Activated CD4-positive, alpha-beta memory T cell treated with anti-CD3 and anti-CD28 coated beads for 36 hours (primary cell): ENCODE measurements at regions of chr12 and their contacts with region 1.

Region 1: DNA sequence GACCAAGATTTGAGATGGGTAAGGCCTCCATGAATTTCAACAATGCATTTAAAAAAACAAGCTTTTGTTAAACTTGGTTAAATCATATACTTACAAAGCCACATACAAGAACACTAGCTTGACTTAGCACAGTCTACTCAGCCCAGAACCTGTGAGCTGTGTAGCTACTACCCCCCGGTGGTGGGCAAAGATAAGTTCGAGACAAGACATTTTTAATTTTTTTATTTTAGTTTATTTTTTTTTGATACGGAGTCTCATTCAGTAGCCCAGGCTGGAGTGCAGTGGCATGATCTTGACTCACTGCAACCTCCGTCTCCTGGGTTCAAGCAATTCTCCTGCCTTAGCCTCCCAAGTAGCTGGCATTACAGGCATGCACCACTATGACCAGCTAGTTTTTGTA is 3.7 kb upstream of the NECAP1 start:
- DNase-seq: peak; percentile 75
- H3K4me3 Mint-ChIP-seq: no peak overlapping the region
- H3K27ac Mint-ChIP-seq: peak overlapping the region; percentile 57
- H3K4me1 Mint-ChIP-seq: peaks cover 45% of the 10 kb centered on the region
- H3K27me3 Mint-ChIP-seq: no peaks in the 10 kb centered on the region

Region 2: DNA sequence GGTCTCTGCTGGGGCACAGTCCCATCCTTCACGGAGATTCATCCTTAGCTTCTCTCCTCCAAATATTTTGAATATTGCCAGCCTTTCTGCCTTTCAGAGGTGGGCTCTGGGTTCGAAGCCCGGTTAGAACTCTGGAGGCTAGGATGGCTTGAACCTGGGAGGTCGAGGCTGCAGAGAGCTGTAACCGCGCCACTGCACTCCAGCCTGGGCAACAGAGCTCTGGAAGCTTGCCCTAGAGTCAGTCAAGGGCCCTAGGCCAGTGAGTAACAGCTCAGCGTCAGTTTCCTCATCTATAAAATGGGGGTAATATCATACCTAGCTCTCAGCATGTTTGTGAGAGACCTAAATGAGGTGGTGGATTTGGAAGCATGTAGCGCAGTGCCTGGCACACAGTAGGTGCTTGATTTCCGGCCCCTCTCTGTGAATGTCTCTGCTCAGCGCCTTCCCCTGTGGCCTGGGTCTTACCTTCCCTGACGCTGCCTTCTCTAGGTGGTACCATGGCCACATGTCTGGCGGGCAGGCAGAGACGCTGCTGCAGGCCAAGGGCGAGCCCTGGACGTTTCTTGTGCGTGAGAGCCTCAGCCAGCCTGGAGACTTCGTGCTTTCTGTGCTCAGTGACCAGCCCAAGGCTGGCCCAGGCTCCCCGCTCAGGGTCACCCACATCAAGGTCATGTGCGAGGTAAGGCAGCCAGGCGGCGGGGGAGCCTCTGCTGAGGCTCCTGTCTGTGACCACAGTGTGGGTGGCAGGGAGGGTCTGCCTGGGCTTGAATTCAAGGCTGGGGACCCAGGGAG is 1123.9 kb before region 1 on chr12:
- CTCF ChIA-PET with region 1: no interaction called
- POLR2A ChIA-PET with region 1: no interaction called
- intact Hi-C with region 1: no loop called
- DNase-seq: no peak
- H3K4me3 Mint-ChIP-seq: peak overlapping the region; percentile 98
- H3K27ac Mint-ChIP-seq: peak overlapping the region; percentile 97
- H3K4me1 Mint-ChIP-seq: peaks cover 71% of the 10 kb centered on the region
- H3K27me3 Mint-ChIP-seq: no peaks in the 10 kb centered on the region

Region 3: DNA sequence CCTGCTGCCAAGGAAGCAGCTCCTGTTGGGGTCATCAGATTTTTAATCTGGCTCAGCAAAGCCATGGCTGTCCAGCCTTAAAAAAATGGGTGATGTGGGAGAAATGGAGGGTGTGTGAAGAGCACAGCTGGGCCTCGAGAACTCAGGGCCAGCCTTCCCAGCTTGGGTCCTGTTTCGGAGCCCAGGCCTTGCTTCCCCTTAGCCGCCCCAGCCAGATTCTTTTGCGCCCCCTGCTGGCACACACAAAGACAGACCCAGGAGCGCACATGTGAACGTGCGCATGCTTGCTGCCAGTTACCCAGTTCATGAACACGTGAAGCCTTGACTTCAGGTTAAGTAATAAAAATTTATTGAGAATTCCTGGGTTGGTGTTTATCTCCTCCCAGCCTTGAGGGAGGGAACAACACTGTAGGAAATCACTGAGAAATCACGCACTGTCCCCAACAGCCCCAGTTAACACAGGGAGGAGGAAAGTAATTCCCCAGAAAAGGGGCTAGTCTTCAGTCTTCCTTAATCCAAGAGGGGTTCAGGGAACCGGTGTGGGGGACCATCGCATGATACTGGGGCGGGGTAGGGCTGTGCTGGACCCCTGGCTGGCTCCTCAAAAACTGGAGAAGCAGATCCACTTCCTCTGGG is 1113.3 kb before region 1 on chr12:
- CTCF ChIA-PET with region 1: no interaction called
- POLR2A ChIA-PET with region 1: no interaction called
- intact Hi-C with region 1: loop called (anchors 2 kb)
- DNase-seq: peak; percentile 93
- H3K4me3 Mint-ChIP-seq: no peak overlapping the region
- H3K27ac Mint-ChIP-seq: peak overlapping the region; percentile 89
- H3K4me1 Mint-ChIP-seq: peaks cover 72% of the 10 kb centered on the region
- H3K27me3 Mint-ChIP-seq: no peaks in the 10 kb centered on the region

Region 4: DNA sequence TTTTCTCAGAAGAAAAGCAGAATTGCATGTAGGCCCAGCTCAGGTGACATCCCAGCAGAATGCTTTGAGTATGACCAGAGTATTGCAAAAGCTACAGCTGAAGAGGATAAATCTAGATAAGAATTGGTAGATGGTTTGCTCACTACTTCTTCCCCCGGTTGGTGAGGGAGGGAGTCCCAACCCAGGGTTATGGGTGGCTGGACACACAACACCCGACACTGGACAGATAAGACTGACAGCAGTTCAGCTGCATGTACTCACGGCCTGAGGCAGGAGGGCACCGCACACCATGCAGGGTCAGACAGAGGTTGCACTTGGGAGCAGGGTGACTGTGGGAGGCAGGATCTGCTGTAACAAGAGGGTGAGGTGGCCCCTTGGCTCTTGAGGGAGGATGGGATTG is 329.5 kb before region 1 on chr12:
- CTCF ChIA-PET with region 1: no interaction called
- POLR2A ChIA-PET with region 1: no interaction called
- intact Hi-C with region 1: no loop called
- DNase-seq: no peak
- H3K4me3 Mint-ChIP-seq: no peak overlapping the region
- H3K27ac Mint-ChIP-seq: no peak overlapping the region
- H3K4me1 Mint-ChIP-seq: no peaks in the 10 kb centered on the region
- H3K27me3 Mint-ChIP-seq: peaks cover 2% of the 10 kb centered on the region

Region 5: GRCh38 chr12:7933255-7933729 is 145.1 kb before region 1 on chr12:
- CTCF ChIA-PET with region 1: interaction called, 39 read pairs
- POLR2A ChIA-PET with region 1: interaction called, 6 read pairs
- intact Hi-C with region 1: loop called (anchors 1 kb)
- DNase-seq: peak; percentile 85
- H3K4me3 Mint-ChIP-seq: no peak overlapping the region
- H3K27ac Mint-ChIP-seq: no peak overlapping the region
- H3K4me1 Mint-ChIP-seq: peaks cover 29% of the 10 kb centered on the region
- H3K27me3 Mint-ChIP-seq: no peaks in the 10 kb centered on the region

Region 6: DNA sequence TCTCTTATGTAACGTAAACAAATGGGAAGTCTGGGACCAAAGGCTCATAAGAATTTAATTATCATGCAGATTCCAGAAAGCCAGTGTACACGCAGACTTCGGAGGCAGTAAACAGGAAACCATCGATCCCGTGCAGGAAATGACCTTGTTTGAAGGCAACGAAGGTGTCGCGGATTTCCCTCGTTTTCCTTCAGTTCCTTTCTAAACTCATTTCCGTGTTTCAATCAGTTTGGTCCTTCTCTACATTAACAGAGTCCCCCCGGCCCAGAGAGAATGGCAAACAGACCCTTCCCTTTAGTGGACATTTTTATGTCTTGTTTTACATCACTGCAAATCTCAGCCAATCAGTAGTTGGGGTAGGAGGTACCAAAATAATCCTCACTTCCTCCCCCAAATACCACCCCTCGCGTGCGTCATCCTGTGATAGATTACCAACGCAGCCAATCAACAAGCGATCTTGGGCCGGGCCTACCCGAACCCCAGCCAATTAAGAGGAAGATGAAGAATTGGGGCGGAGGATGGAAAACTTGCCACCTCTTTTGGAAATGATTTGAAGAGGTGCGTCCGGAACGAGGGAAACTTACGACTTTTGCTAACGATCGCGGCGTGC is 52.0 kb before region 1 on chr12:
- CTCF ChIA-PET with region 1: interaction called, 17 read pairs
- POLR2A ChIA-PET with region 1: interaction called, 5 read pairs
- intact Hi-C with region 1: loop called (anchors 1 kb)
- DNase-seq: peak; percentile 98
- H3K4me3 Mint-ChIP-seq: peak overlapping the region; percentile 88
- H3K27ac Mint-ChIP-seq: peak overlapping the region; percentile 100
- H3K4me1 Mint-ChIP-seq: peaks cover 9% of the 10 kb centered on the region
- H3K27me3 Mint-ChIP-seq: no peaks in the 10 kb centered on the region

Region 7: GRCh38 chr12:8045952-8046944 is 32.1 kb before region 1 on chr12:
- CTCF ChIA-PET with region 1: interaction called, 263 read pairs
- POLR2A ChIA-PET with region 1: no interaction called
- intact Hi-C with region 1: loop called (anchors 1 kb)
- DNase-seq: peak; percentile 88
- H3K4me3 Mint-ChIP-seq: no peak overlapping the region
- H3K27ac Mint-ChIP-seq: peak overlapping the region; percentile 45
- H3K4me1 Mint-ChIP-seq: peaks cover 18% of the 10 kb centered on the region
- H3K27me3 Mint-ChIP-seq: no peaks in the 10 kb centered on the region

Region 8: GRCh38 chr12:8088574-8088973 is 10.2 kb after region 1 on chr12:
- CTCF ChIA-PET with region 1: interaction called, 20 read pairs
- POLR2A ChIA-PET with region 1: no interaction called
- intact Hi-C with region 1: no loop called
- DNase-seq: peak; percentile 63
- H3K4me3 Mint-ChIP-seq: peak overlapping the region; percentile 62
- H3K27ac Mint-ChIP-seq: peak overlapping the region; percentile 89
- H3K4me1 Mint-ChIP-seq: peaks cover 49% of the 10 kb centered on the region
- H3K27me3 Mint-ChIP-seq: no peaks in the 10 kb centered on the region

Region 9: DNA sequence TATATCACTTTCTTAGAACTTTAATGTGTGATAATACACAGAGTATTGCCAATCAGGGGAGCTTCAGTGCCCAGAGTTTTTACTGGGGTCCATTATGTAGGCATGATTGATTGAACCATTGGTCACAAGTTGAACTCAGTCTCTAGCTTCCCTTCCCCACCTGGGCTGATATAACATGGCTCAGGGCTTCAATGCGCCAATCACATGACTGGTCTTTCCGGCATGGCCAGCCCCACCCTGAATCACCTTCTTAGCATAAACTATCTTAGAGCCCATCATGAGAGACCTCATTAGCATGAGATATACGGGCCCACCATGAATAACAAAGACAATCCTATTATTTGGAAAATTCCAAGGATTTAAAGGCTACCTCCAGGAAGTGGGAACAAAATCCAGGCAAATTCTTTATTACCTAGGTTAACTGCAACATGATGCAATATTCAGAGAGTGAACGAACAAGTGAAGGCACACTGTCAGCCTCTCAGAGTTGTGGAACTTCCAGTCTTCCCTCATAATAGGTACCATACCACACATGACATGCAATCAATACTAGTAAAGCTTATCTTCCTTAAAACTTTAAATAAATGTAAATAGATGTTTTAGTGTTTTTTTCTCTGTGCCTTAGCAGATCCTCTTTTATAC is 41.8 kb after region 1 on chr12:
- CTCF ChIA-PET with region 1: no interaction called
- POLR2A ChIA-PET with region 1: no interaction called
- intact Hi-C with region 1: no loop called
- DNase-seq: no peak
- H3K4me3 Mint-ChIP-seq: no peak overlapping the region
- H3K27ac Mint-ChIP-seq: no peak overlapping the region
- H3K4me1 Mint-ChIP-seq: no peaks in the 10 kb centered on the region
- H3K27me3 Mint-ChIP-seq: no peaks in the 10 kb centered on the region